Endothelial cell of umbilical vein (primary cell): ENCODE measurements at regions of chr5 and their contacts with region 1.

Region 1: DNA sequence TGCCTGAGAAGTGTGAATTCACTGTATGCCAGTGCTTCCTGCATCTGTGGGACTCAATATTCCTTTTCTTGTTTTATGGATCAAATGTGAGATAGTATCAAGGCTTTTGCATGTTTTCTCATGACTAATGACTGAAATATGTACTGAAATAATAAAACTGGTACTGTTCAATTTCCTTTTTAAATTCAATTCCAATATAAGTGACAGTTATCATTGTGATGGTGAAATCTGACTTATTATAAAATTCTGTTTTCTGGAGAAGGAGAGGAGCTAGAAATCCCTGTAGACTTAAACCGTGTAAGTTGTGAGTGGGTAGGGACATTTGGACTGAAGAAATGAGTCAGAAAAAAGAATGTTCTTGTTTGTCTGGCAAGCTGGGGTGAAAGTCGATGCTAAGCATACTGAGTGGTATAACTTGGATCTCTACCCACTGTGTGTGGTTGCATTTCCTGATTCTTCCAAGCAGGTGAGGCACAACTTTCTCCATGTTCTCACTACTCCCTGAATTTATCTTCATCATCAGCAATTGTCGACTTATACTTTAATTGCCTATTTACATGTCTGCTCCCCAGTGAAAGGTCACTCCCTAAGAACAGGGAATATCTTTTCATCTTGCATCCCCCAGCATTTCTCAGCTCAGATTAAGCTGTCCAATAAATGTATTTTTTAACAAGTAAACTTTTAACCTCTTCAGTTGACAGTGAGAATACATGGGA is 245.0 kb downstream of the EFNA5 start:
- DNase-seq: peak; percentile 93
- H3K4me3 ChIP-seq: peak overlapping the region in 1 of 3 experiments; percentile 22
- H3K27ac ChIP-seq: peak overlapping the region; percentile 83
- H3K4me1 ChIP-seq: peaks cover 50% of the 10 kb centered on the region
- H3K27me3 ChIP-seq: no peaks in the 10 kb centered on the region
- CTCF ChIP-seq: no peak
- POLR2A ChIP-seq: peak; percentile 59

Region 2: GRCh38 chr5:107322936-107323335 is 102.8 kb before region 1 on chr5:
- CTCF ChIA-PET with region 1: no interaction called
- POLR2A ChIA-PET with region 1: interaction called, 3 read pairs
- dilution Hi-C with region 1: no loop called
- intact Hi-C with region 1: loop called (anchors 2 kb)
- DNase-seq: peak; percentile 57
- H3K4me3 ChIP-seq: no peak overlapping the region
- H3K27ac ChIP-seq: no peak overlapping the region
- H3K4me1 ChIP-seq: peaks cover 24% of the 10 kb centered on the region
- H3K27me3 ChIP-seq: no peaks in the 10 kb centered on the region
- CTCF ChIP-seq: no peak
- POLR2A ChIP-seq: no peak

Region 3: GRCh38 chr5:107361945-107362344 is 63.8 kb before region 1 on chr5:
- CTCF ChIA-PET with region 1: no interaction called
- POLR2A ChIA-PET with region 1: no interaction called
- dilution Hi-C with region 1: no loop called
- intact Hi-C with region 1: no loop called
- DNase-seq: no peak
- H3K4me3 ChIP-seq: no peak overlapping the region
- H3K27ac ChIP-seq: no peak overlapping the region
- H3K4me1 ChIP-seq: peaks cover 7% of the 10 kb centered on the region
- H3K27me3 ChIP-seq: no peaks in the 10 kb centered on the region
- CTCF ChIP-seq: no peak
- POLR2A ChIP-seq: no peak

Region 4: GRCh38 chr5:107389130-107389774 is 36.4 kb before region 1 on chr5:
- CTCF ChIA-PET with region 1: interaction called, 6 read pairs
- POLR2A ChIA-PET with region 1: interaction called, 6 read pairs
- dilution Hi-C with region 1: no loop called
- intact Hi-C with region 1: loop called (anchors 1 kb)
- DNase-seq: peak; percentile 92
- H3K4me3 ChIP-seq: no peak overlapping the region
- H3K27ac ChIP-seq: peak overlapping the region; percentile 57
- H3K4me1 ChIP-seq: peaks cover 32% of the 10 kb centered on the region
- H3K27me3 ChIP-seq: no peaks in the 10 kb centered on the region
- CTCF ChIP-seq: no peak
- POLR2A ChIP-seq: no peak

Region 5: GRCh38 chr5:107469485-107470294 is 44.0 kb after region 1 on chr5:
- CTCF ChIA-PET with region 1: interaction called, 10 read pairs
- POLR2A ChIA-PET with region 1: interaction called, 20 read pairs
- dilution Hi-C with region 1: no loop called
- intact Hi-C with region 1: loop called (anchors 1 kb)
- DNase-seq: peak; percentile 96
- H3K4me3 ChIP-seq: peak overlapping the region in 1 of 3 experiments; percentile 16
- H3K27ac ChIP-seq: peak overlapping the region; percentile 97
- H3K4me1 ChIP-seq: peaks cover 61% of the 10 kb centered on the region
- H3K27me3 ChIP-seq: no peaks in the 10 kb centered on the region
- CTCF ChIP-seq: no peak
- POLR2A ChIP-seq: no peak

Region 6: DNA sequence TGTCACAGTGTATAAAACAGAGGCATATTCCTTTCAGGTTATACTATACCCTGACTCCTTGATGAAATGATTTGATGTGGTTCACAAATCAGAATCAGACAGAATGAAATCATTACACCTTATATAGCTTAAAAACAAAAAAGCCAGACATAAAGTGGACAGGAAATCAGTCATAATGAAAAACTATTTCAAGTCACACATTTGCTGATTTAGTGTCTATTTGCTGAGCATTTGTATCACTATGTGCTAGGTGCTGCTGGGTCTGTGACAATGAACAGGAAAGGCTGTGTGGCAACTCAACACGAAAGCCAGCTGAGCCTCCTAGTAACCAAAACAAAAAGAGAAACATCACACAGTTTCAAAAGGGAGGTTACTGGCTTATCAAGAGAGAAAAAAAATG is 51.1 kb after region 1 on chr5:
- CTCF ChIA-PET with region 1: interaction called, 3 read pairs
- POLR2A ChIA-PET with region 1: no interaction called
- dilution Hi-C with region 1: no loop called
- intact Hi-C with region 1: loop called (anchors 1 kb)
- DNase-seq: peak; percentile 94
- H3K4me3 ChIP-seq: no peak overlapping the region
- H3K27ac ChIP-seq: peak overlapping the region; percentile 93
- H3K4me1 ChIP-seq: peaks cover 46% of the 10 kb centered on the region
- H3K27me3 ChIP-seq: no peaks in the 10 kb centered on the region
- CTCF ChIP-seq: no peak
- POLR2A ChIP-seq: no peak

Region 7: GRCh38 chr5:107501965-107502675 is 76.4 kb after region 1 on chr5:
- CTCF ChIA-PET with region 1: no interaction called
- POLR2A ChIA-PET with region 1: no interaction called
- dilution Hi-C with region 1: no loop called
- intact Hi-C with region 1: loop called (anchors 1 kb)
- DNase-seq: peak; percentile 93
- H3K4me3 ChIP-seq: peak overlapping the region; percentile 43 to 90 (median 59)
- H3K27ac ChIP-seq: peak overlapping the region; percentile 97
- H3K4me1 ChIP-seq: peaks cover 24% of the 10 kb centered on the region
- H3K27me3 ChIP-seq: no peaks in the 10 kb centered on the region
- CTCF ChIP-seq: no peak
- POLR2A ChIP-seq: peak; percentile 86

Region 8: DNA sequence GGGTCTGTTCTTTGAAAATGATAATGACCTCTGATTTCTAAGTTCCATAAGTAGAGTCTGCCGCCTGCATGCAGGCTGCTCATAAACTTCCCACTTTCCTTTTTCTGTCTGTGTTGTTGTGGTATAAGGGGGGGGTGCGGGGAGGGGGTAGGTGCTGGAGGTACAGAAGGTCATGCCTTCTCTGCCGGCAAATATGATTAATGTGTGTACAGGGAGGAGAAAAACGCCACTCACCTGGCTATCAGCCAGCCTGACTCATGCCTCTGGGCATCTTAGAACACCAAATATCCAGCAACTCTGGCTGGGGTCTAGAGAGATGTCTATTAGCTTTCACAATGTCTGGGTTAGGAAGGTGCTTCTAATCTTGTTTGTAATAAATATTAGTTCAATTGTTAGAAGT is 116.7 kb after region 1 on chr5:
- CTCF ChIA-PET with region 1: no interaction called
- POLR2A ChIA-PET with region 1: no interaction called
- dilution Hi-C with region 1: no loop called
- intact Hi-C with region 1: loop called (anchors 1 kb)
- DNase-seq: peak; percentile 98
- H3K4me3 ChIP-seq: peak overlapping the region in 1 of 3 experiments; percentile 55
- H3K27ac ChIP-seq: peak overlapping the region; percentile 96
- H3K4me1 ChIP-seq: peaks cover 29% of the 10 kb centered on the region
- H3K27me3 ChIP-seq: no peaks in the 10 kb centered on the region
- CTCF ChIP-seq: no peak
- POLR2A ChIP-seq: no peak